OCI-LY7 (cell line): ENCODE measurements at regions of chr3 and their contacts with region 1.

Region 1: GRCh38 chr3:43378066-43378935 is 92.0 kb downstream of the SNRK start:
- DNase-seq: peak; percentile 60
- H3K4me3 ChIP-seq: no peak overlapping the region
- H3K27ac ChIP-seq: no peak overlapping the region
- H3K4me1 ChIP-seq: no peaks in the 10 kb centered on the region
- CTCF ChIP-seq: peak; percentile 85

Region 2: GRCh38 chr3:42451546-42452230 is 926.6 kb before region 1 on chr3:
- CTCF ChIA-PET with region 1: no interaction called
- POLR2A ChIA-PET with region 1: no interaction called
- intact Hi-C with region 1: no loop called
- DNase-seq: no peak
- H3K4me3 ChIP-seq: no peak overlapping the region
- H3K27ac ChIP-seq: no peak overlapping the region
- H3K4me1 ChIP-seq: peaks cover 12% of the 10 kb centered on the region
- CTCF ChIP-seq: no peak

Region 3: GRCh38 chr3:42961633-42962032 is 416.7 kb before region 1 on chr3:
- CTCF ChIA-PET with region 1: no interaction called
- POLR2A ChIA-PET with region 1: no interaction called
- intact Hi-C with region 1: loop called (anchors 10 kb)
- DNase-seq: peak; percentile 19
- H3K4me3 ChIP-seq: no peak overlapping the region
- H3K27ac ChIP-seq: no peak overlapping the region
- H3K4me1 ChIP-seq: no peaks in the 10 kb centered on the region
- CTCF ChIP-seq: peak; percentile 75

Region 4: GRCh38 chr3:43162230-43163084 is 215.8 kb before region 1 on chr3:
- CTCF ChIA-PET with region 1: no interaction called
- POLR2A ChIA-PET with region 1: no interaction called
- intact Hi-C with region 1: loop called (anchors 10 kb)
- DNase-seq: peak; percentile 29
- H3K4me3 ChIP-seq: no peak overlapping the region
- H3K27ac ChIP-seq: no peak overlapping the region
- H3K4me1 ChIP-seq: no peaks in the 10 kb centered on the region
- CTCF ChIP-seq: peak; percentile 67

Region 5: DNA sequence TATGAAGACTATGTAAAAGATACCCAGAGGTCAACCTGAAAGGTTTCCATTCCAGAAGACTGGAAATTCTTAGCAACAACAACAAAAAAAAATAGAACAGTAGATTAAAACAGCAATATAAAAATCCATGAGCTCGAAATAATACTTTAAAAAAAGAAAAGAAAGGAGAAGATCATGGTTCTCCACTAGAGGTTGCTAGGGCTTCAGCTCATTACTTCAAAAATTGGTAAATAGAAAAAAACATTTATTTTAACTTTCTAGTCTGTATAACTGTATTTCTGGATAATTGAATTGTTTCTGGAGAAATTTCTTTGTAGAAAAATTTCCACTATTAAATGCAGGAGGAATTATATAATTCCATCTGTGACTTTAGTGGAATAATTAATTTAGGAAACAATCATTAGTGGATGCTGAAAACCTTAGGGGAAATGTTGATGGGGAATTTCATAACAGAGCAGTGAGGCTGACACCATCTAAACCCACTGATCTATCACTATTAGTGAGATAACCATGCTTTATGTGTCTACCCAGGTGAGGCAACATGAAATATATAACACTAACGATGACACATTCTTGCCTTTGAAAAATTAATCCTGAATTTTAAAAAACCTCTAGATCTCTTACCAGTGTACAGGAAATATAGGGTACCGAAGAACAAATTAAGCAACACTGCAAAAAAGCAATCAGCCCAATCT is 154.5 kb before region 1 on chr3:
- CTCF ChIA-PET with region 1: no interaction called
- POLR2A ChIA-PET with region 1: no interaction called
- intact Hi-C with region 1: loop called (anchors 2 kb)
- DNase-seq: peak; percentile 4
- H3K4me3 ChIP-seq: no peak overlapping the region
- H3K27ac ChIP-seq: no peak overlapping the region
- H3K4me1 ChIP-seq: no peaks in the 10 kb centered on the region
- CTCF ChIP-seq: peak; percentile 67